ENCODE measurements at regions of chr20 and their contacts with region 1.

Region 1: DNA sequence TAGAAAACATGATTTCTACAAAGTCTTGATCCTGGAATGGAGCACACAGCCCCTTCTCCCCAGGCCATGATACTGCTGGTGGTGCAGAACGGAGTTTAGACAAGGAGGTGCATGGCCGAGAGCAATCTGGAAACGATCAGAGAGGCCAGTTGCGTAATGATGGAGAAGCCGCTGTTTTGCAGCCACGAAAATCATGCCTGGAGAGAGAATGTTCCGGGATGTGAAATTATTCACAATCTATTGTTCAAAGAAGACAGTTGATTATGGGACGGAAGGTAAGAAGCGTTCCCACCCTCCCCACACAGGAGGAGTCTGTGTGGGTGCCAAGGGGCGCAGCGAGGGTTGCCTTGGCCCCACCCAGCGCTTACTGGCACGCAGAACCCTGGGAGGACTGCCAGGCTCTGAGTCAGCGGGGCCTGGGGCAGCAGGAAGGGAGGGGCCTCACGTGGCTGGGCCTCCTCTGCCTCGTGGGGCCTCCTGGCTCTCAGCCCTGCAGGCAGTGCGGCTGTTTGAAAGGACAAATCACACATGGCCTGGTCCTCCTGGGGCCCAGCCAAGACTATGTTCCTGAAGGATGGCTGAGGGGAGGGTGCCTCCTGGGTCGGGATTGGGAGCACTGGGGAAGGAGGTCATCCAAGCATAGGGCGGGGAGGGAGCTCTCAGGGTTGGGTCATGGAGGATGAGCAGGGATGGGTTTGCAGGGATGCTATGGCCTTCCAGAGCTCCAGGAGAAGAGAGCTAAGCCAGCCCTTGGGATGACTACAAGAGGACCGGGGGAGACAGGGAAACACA is 8.7 kb upstream of the AP5S1 start:
- DNase-seq: peak; percentile 93
- ATAC-seq: peak; percentile 80
- H3K4me3 Mint-ChIP-seq: peak overlapping the region; percentile 69
- H3K27ac Mint-ChIP-seq: peak overlapping the region; percentile 98
- H3K4me1 Mint-ChIP-seq: peaks cover 71% of the 10 kb centered on the region
- H3K27me3 Mint-ChIP-seq: no peaks in the 10 kb centered on the region

Region 2: GRCh38 chr20:3795511-3796468 is 15.9 kb before region 1 on chr20 and contains the start of gene CDC25B:
- CTCF ChIA-PET with region 1: interaction called, 51 read pairs
- DNase-seq: peak; percentile 97
- ATAC-seq: peak; percentile 79
- H3K4me3 Mint-ChIP-seq: peak within 1 kb of the TSS; percentile 94
- H3K27ac Mint-ChIP-seq: peak within 1 kb of the TSS; percentile 95
- H3K4me1 Mint-ChIP-seq: peaks cover 35% of the 10 kb centered on the region
- H3K27me3 Mint-ChIP-seq: no peaks in the 10 kb centered on the region
- total RNA-seq, gene CDC25B: 194 to 312 TPM

Measured in activated CD8-positive, alpha-beta memory T cell treated with anti-CD3 and anti-CD28 coated beads, Interleukin-2, amount 10 ng/mL, durations not matched to agents 7 days and 5 days (primary cell).